WTC11 (cell line): ENCODE measurements at regions of chr10 and their contacts with region 1.

Region 1: GRCh38 chr10:99870123-99870730 is 87.8 kb downstream of the ABCC2 start:
- DNase-seq: no peak
- ATAC-seq: no peak
- H3K4me3 Mint-ChIP-seq: no peak overlapping the region
- H3K27ac Mint-ChIP-seq: no peak overlapping the region
- H3K4me1 Mint-ChIP-seq: no peaks in the 10 kb centered on the region
- H3K27me3 Mint-ChIP-seq: peaks cover 15% of the 10 kb centered on the region
- CTCF ChIP-seq: no peak

Region 2: GRCh38 chr10:99854860-99855259 is 15.4 kb before region 1 on chr10:
- CTCF ChIA-PET with region 1: interaction called, 12 read pairs
- POLR2A ChIA-PET with region 1: interaction called, 3 read pairs
- DNase-seq: no peak
- ATAC-seq: peak; percentile 18
- H3K4me3 Mint-ChIP-seq: no peak overlapping the region
- H3K27ac Mint-ChIP-seq: peak overlapping the region; percentile 43; the same call in 1 of the 2 replicates
- H3K4me1 Mint-ChIP-seq: peaks cover 52% of the 10 kb centered on the region
- H3K27me3 Mint-ChIP-seq: peaks cover 2% of the 10 kb centered on the region; the same call in 1 of the 2 replicates
- CTCF ChIP-seq: no peak

Region 3: GRCh38 chr10:100081075-100082001 is 211.1 kb after region 1 on chr10 and contains the start of gene CPN1:
- CTCF ChIA-PET with region 1: no interaction called
- POLR2A ChIA-PET with region 1: no interaction called
- DNase-seq: no peak
- ATAC-seq: no peak
- H3K4me3 Mint-ChIP-seq: no peak within 1 kb of the TSS
- H3K27ac Mint-ChIP-seq: no peak within 1 kb of the TSS
- H3K4me1 Mint-ChIP-seq: no peaks in the 10 kb centered on the region
- H3K27me3 Mint-ChIP-seq: no peaks in the 10 kb centered on the region
- CTCF ChIP-seq: no peak
- total RNA-seq, gene CPN1: 0.42 to 0.69 TPM (median 0.66 TPM) in 3 replicates